ENCODE measurements at regions of chr11 and their contacts with region 1.

Region 1: GRCh38 chr11:60265373-60266214 is 14.9 kb upstream of the MS4A4A start:
- DNase-seq: peak; percentile 28 to 36
- ATAC-seq: peak; percentile 62 to 75
- H3K4me3 ChIP-seq: no peak overlapping the region
- H3K27ac ChIP-seq: no peak overlapping the region
- H3K4me1 ChIP-seq: no peaks in the 10 kb centered on the region
- CTCF ChIP-seq: peak; percentile 63
- EP300 ChIP-seq: no peak
- POLR2A ChIP-seq: no peak
- RAD21 ChIP-seq: peak; percentile 63 to 71

Region 2: GRCh38 chr11:60251485-60252212 is 13.9 kb before region 1 on chr11:
- CTCF ChIA-PET with region 1: interaction called, 15 read pairs
- POLR2A ChIA-PET with region 1: no interaction called
- DNase-seq: peak in 1 of 2 experiments; percentile 16
- ATAC-seq: peak; percentile 56 to 63
- H3K4me3 ChIP-seq: no peak overlapping the region
- H3K27ac ChIP-seq: no peak overlapping the region
- H3K4me1 ChIP-seq: no peaks in the 10 kb centered on the region
- CTCF ChIP-seq: peak; percentile 33; the same call in 2 of the 3 replicates
- EP300 ChIP-seq: no peak
- POLR2A ChIP-seq: no peak
- RAD21 ChIP-seq: peak; percentile 22 to 33; a peak in 2 of 5 replicates

Region 3: GRCh38 chr11:60657888-60658287 is 392.3 kb after region 1 on chr11:
- CTCF ChIA-PET with region 1: no interaction called
- POLR2A ChIA-PET with region 1: no interaction called
- DNase-seq: peak in 1 of 2 experiments; percentile 16
- ATAC-seq: peak; percentile 43 to 54; a peak in 3 of 6 replicates
- H3K4me3 ChIP-seq: no peak overlapping the region
- H3K27ac ChIP-seq: no peak overlapping the region
- H3K4me1 ChIP-seq: no peaks in the 10 kb centered on the region
- CTCF ChIP-seq: no peak
- EP300 ChIP-seq: no peak
- POLR2A ChIP-seq: no peak
- RAD21 ChIP-seq: peak in 1 of 2 experiments; percentile 13; a peak in 1 of 5 replicates